ENCODE measurements at regions of chr18 and their contacts with region 1.

Region 1: DNA sequence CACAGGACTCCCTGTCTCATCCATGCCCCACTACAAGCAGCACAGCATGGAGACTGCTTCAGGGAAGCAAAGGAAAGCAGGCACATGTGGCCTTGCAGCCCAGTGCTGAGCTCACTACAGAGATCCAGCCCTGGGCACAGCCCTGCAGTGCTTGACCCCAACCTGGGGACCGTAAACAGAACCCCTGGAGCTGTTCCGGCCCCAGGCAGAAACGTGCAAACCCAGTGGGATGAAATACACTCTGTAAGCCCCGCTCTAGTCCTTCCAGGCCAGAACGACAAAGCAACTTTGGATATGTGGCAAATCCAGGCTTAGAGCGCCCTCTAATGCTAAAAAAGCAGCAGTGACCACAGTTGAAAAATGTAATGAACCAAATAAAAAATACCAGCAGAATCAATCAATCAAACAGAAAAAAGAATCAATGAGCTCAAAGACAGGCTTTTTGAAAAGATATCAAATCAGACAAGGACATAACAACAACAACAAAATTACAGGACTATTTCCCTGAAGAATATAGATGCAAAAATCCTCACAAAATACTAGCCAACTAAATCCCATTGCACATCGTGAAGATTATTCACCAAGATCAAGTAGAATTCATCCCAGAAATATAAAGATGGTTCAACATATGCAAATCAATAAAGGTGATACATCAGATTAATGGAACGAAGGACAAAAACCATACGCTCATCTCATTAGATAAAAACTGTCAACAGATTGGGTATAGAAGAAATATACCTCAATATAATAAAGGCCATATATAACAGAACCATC is 45.6 kb downstream of the ZNF519 start:
- DNase-seq: peak in 1 of 2 experiments; percentile 19
- H3K4me3 ChIP-seq: no peak overlapping the region
- H3K27ac ChIP-seq: no peak overlapping the region
- H3K4me1 ChIP-seq: no peaks in the 10 kb centered on the region
- H3K27me3 ChIP-seq: no peaks in the 10 kb centered on the region
- CTCF ChIP-seq: peak; percentile 84

Region 2: DNA sequence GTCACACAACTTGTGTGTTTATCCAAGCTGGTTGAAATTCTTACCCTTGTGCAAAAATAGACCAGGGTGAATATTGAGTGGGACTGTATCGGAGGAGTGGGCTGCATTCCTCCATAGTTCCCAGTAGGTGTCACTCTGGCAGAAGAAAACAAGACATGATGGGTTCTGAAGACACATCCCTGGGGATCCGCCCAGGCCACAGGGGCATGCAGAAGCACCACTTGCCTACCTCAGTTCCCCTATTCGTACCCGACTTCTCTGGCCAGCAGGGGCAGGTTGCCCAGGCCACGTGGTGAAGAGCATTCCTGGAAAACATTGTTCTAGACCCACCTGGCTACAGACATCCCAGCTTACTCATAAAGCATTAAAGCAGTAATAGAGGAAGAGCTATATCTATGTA is 528.5 kb before region 1 on chr18:
- CTCF ChIA-PET with region 1: no interaction called
- POLR2A ChIA-PET with region 1: no interaction called
- intact Hi-C with region 1: loop called (anchors 2 kb)
- DNase-seq: peak in 1 of 2 experiments; percentile 11
- H3K4me3 ChIP-seq: no peak overlapping the region
- H3K27ac ChIP-seq: no peak overlapping the region
- H3K4me1 ChIP-seq: no peaks in the 10 kb centered on the region
- H3K27me3 ChIP-seq: peaks cover 73% of the 10 kb centered on the region
- CTCF ChIP-seq: peak; percentile 61

Region 3: DNA sequence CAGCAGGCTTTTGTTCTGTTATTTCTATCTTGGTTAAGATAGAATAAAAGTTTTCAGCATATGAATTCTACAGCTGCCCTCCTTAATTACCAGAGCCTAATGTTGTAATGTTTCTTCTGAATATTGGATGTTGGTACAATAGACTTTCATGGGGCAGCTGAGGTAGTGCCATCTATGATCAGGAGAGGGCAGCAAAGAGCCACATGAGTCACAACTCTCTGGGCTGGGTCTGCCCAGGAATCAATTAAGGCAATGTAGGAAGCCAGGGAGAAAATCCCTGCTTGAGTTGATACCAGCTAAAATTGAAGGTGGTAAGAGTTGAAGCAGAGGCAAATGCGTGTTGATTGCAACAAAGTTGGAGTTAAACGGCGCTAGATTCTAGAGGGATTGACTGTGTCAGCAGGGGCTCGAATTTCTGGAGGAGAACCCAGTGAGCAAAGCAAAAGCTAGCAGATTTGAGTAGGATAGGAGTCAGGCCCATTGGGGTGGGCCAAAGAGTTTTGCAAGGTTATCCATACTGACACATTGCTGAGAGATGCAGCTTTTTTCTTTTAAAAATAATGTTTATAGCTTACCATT is 273.3 kb before region 1 on chr18:
- CTCF ChIA-PET with region 1: interaction called, 6 read pairs
- POLR2A ChIA-PET with region 1: no interaction called
- intact Hi-C with region 1: loop called (anchors 1 kb)
- DNase-seq: peak; percentile 47 to 67
- H3K4me3 ChIP-seq: no peak overlapping the region
- H3K27ac ChIP-seq: no peak overlapping the region
- H3K4me1 ChIP-seq: peaks cover 19% of the 10 kb centered on the region
- H3K27me3 ChIP-seq: peaks cover 8% of the 10 kb centered on the region; the same call in 1 of the 2 replicates
- CTCF ChIP-seq: peak; percentile 88

Region 4: GRCh38 chr18:13823707-13824395 is 262.8 kb before region 1 on chr18 and contains the start of gene MC5R:
- CTCF ChIA-PET with region 1: interaction called, 3 read pairs
- POLR2A ChIA-PET with region 1: no interaction called
- intact Hi-C with region 1: loop called (anchors 1 kb)
- DNase-seq: peak in 1 of 2 experiments; percentile 53
- H3K4me3 ChIP-seq: no peak within 1 kb of the TSS; the same call in 1 of the 2 replicates
- H3K27ac ChIP-seq: no peak within 1 kb of the TSS
- H3K4me1 ChIP-seq: no peaks in the 10 kb centered on the region
- H3K27me3 ChIP-seq: peaks cover 49% of the 10 kb centered on the region
- CTCF ChIP-seq: peak; percentile 86
- total RNA-seq, gene MC5R: not detected in 2 replicates

Region 5: GRCh38 chr18:13834496-13835015 is 252.1 kb before region 1 on chr18:
- CTCF ChIA-PET with region 1: no interaction called
- POLR2A ChIA-PET with region 1: no interaction called
- intact Hi-C with region 1: no loop called
- DNase-seq: peak in 1 of 2 experiments; percentile 54
- H3K4me3 ChIP-seq: no peak overlapping the region
- H3K27ac ChIP-seq: no peak overlapping the region
- H3K4me1 ChIP-seq: no peaks in the 10 kb centered on the region
- H3K27me3 ChIP-seq: peaks cover 44% of the 10 kb centered on the region
- CTCF ChIP-seq: no peak

Region 6: DNA sequence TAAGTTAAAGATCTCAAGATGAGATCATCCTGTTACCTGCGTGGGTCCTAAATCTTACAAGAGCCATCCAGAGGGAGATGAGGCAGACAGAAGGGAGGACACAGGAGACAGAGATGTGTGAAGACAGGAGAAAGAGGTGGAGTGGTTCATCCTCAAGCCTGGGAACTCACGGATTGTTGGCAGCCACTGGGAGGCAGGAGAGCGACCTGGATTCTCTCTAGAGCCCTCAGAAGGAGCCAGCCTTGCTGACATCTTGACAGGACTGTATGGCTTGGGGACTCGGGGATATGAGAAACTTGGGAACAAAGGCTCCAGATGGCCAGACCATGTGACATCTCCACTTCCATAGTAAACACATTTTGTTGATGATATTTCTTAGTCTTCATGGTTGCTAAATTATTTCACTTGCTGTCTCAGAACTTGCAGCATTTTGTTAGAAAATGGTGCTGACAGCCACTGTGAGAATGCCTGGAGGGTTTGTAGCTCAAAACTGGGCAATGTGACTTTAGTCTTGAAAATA is 113.5 kb before region 1 on chr18:
- CTCF ChIA-PET with region 1: no interaction called
- POLR2A ChIA-PET with region 1: no interaction called
- intact Hi-C with region 1: no loop called
- DNase-seq: no peak
- H3K4me3 ChIP-seq: no peak overlapping the region
- H3K27ac ChIP-seq: no peak overlapping the region
- H3K4me1 ChIP-seq: no peaks in the 10 kb centered on the region
- H3K27me3 ChIP-seq: peaks cover 30% of the 10 kb centered on the region
- CTCF ChIP-seq: no peak

Measured in PC-9 (cell line).